Psoas muscle (tissue), 8 donors: ENCODE measurements at regions of chr13 and their contacts with region 1.

Region 1: DNA sequence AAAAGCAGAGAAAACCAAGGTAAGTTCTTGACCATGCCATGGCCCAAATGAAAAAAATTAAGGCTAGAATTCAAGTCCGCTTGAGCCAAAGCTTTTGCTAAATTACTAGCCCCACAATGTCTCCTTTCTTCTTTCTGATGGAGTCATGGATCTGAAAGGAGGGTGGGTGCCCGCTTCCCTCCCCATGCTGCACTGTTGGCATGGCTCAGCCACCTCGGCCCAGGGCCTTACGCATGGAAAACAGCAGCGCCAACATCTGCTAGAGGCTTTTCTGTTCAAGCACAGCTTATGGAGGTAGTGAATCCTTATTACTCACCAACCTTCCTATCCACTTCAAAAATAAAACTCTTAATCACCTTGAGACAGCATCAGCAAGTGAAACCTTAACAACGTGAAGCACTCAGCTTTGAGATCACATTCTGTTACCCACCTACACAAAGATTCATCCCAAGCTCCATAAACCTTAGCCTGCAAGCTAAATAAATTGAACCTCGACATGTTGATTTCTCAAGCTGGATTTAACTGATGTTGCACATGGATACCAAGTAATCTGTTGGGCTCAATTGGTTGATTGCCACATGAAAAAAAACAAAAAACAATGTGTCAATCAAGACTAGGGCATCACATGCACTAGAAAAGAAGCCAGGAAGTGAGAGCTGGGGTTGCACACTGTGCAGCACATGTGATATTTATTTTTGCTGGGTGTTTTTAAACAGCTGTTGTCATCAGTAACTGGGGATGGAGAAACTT is 43.4 kb downstream of the TPT1 start:
- DNase-seq: no peak
- ATAC-seq: peak; percentile 53 to 64 (median 57)
- H3K4me3 ChIP-seq: peak overlapping the region; percentile 41
- H3K27ac ChIP-seq: peak overlapping the region; percentile 84
- H3K4me1 ChIP-seq: peaks cover 27% of the 10 kb centered on the region
- H3K27me3 ChIP-seq: no peaks in the 10 kb centered on the region
- CTCF ChIP-seq: no peak

Region 2: GRCh38 chr13:45162821-45163220 is 134.8 kb before region 1 on chr13:
- intact Hi-C with region 1: no loop called
- DNase-seq: no peak
- ATAC-seq: no peak
- H3K4me3 ChIP-seq: no peak overlapping the region
- H3K27ac ChIP-seq: no peak overlapping the region
- H3K4me1 ChIP-seq: peaks cover 2% of the 10 kb centered on the region
- H3K27me3 ChIP-seq: no peaks in the 10 kb centered on the region
- CTCF ChIP-seq: no peak

Region 3: DNA sequence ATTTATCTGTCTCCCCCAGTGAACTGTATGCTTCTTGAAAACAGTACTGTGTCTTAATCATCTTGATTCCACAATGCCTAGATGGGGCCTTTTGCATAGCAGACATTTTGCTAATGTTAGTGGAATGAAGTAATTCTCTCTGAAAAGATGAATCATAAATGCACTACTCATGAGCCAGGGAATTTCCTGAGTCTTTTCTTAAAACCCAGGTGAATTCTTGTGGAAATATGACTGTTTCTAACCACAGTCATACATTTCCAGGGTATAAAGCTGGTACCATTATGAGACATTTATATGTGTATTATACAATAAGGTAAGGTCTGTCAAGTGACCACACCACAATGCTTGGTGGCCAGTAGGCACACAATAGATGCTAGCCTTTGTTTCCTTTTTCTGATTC is 91.3 kb before region 1 on chr13:
- intact Hi-C with region 1: loop called in 1 of 2 experiments (anchors 10 kb)
- DNase-seq: no peak
- ATAC-seq: peak in 3 of 4 donors; percentile 28 to 52 (median 46)
- H3K4me3 ChIP-seq: no peak overlapping the region
- H3K27ac ChIP-seq: peak overlapping the region; percentile 77
- H3K4me1 ChIP-seq: peaks cover 9% of the 10 kb centered on the region
- H3K27me3 ChIP-seq: no peaks in the 10 kb centered on the region
- CTCF ChIP-seq: no peak